Activated B cell treated with CpG ODN at 0.5 μM for 24 hours (primary cell): ENCODE measurements at regions of chr11 and their contacts with region 1.

Region 1: DNA sequence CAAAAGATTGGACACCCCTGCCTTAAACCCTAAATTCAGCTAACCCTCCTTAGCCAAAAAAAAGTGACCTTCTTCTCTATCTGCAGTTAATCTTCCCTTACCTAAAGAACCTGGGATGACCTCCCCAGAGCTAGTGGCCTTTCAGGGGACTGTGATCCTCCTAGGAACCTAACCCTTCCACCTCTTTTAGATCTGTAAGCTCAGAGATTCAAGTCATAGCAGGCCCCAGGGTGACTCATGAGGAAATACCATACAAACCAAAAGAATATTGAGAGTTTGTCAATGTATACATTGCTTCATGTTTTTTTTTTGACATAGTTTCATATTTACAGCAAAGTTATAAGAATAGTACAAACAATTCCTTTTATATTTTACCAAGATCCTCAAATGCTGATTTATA is 38.3 kb upstream of the CXCR5 start:
- DNase-seq: no peak
- ATAC-seq: no peak
- H3K4me3 Mint-ChIP-seq: no peak overlapping the region
- H3K27ac Mint-ChIP-seq: peak overlapping the region; percentile 46
- H3K4me1 Mint-ChIP-seq: peaks cover 58% of the 10 kb centered on the region
- H3K27me3 Mint-ChIP-seq: no peaks in the 10 kb centered on the region
- CTCF ChIP-seq: no peak

Region 2: GRCh38 chr11:118797510-118797909 is 47.9 kb before region 1 on chr11:
- CTCF ChIA-PET with region 1: no interaction called
- POLR2A ChIA-PET with region 1: interaction called, 22 read pairs
- intact Hi-C with region 1: no loop called
- DNase-seq: no peak
- ATAC-seq: no peak
- H3K4me3 Mint-ChIP-seq: no peak overlapping the region
- H3K27ac Mint-ChIP-seq: no peak overlapping the region
- H3K4me1 Mint-ChIP-seq: peaks cover 35% of the 10 kb centered on the region
- H3K27me3 Mint-ChIP-seq: no peaks in the 10 kb centered on the region
- CTCF ChIP-seq: no peak

Region 3: GRCh38 chr11:119018074-119018938 is 172.9 kb after region 1 on chr11 and contains the starts of genes RPS25 and TRAPPC4:
- CTCF ChIA-PET with region 1: no interaction called
- POLR2A ChIA-PET with region 1: no interaction called
- intact Hi-C with region 1: no loop called
- DNase-seq: peak; percentile 90
- ATAC-seq: peak; percentile 87
- H3K4me3 Mint-ChIP-seq: peak within 1 kb of the TSS; percentile 99
- H3K27ac Mint-ChIP-seq: peak within 1 kb of the TSS; percentile 100
- H3K4me1 Mint-ChIP-seq: peaks cover 54% of the 10 kb centered on the region
- H3K27me3 Mint-ChIP-seq: no peaks in the 10 kb centered on the region
- CTCF ChIP-seq: no peak
- total RNA-seq, gene RPS25: 2,191 and 2,534 TPM in 2 replicates
- total RNA-seq, gene TRAPPC4: 56.8 and 60.1 TPM in 2 replicates

Region 4: GRCh38 chr11:119218141-119218878 is 372.9 kb after region 1 on chr11:
- CTCF ChIA-PET with region 1: no interaction called
- POLR2A ChIA-PET with region 1: no interaction called
- intact Hi-C with region 1: no loop called
- DNase-seq: no peak
- ATAC-seq: no peak
- H3K4me3 Mint-ChIP-seq: no peak overlapping the region
- H3K27ac Mint-ChIP-seq: peak overlapping the region; percentile 7
- H3K4me1 Mint-ChIP-seq: peaks cover 29% of the 10 kb centered on the region
- H3K27me3 Mint-ChIP-seq: no peaks in the 10 kb centered on the region
- CTCF ChIP-seq: no peak